ENCODE measurements at regions of chr1 and their contacts with region 1.

Region 1: GRCh38 chr1:27154991-27155781 is at the start of gene SLC9A1:
- DNase-seq: peak; percentile 95 to 97 (median 96)
- H3K4me3 ChIP-seq: peak within 1 kb of the TSS; percentile 71
- H3K27ac ChIP-seq: peak within 1 kb of the TSS; percentile 42 to 78
- H3K4me1 ChIP-seq: peaks cover 15% of the 10 kb centered on the region
- H3K27me3 ChIP-seq: no peaks in the 10 kb centered on the region
- CTCF ChIP-seq: peak; percentile 56 to 77 (median 73)
- EP300 ChIP-seq: no peak
- POLR2A ChIP-seq: peak; percentile 100
- total RNA-seq, gene SLC9A1: 8.6 to 33.7 (median 14.8) TPM

Region 2: GRCh38 chr1:26602378-26602959 is 552.7 kb before region 1 on chr1:
- intact Hi-C with region 1: no loop called
- DNase-seq: peak in 1 of 5 donors; percentile 60
- H3K4me3 ChIP-seq: no peak overlapping the region
- H3K27ac ChIP-seq: no peak overlapping the region
- H3K4me1 ChIP-seq: no peaks in the 10 kb centered on the region
- H3K27me3 ChIP-seq: no peaks in the 10 kb centered on the region
- CTCF ChIP-seq: peak; percentile 81 to 97 (median 94)
- EP300 ChIP-seq: no peak
- POLR2A ChIP-seq: no peak

Region 3: DNA sequence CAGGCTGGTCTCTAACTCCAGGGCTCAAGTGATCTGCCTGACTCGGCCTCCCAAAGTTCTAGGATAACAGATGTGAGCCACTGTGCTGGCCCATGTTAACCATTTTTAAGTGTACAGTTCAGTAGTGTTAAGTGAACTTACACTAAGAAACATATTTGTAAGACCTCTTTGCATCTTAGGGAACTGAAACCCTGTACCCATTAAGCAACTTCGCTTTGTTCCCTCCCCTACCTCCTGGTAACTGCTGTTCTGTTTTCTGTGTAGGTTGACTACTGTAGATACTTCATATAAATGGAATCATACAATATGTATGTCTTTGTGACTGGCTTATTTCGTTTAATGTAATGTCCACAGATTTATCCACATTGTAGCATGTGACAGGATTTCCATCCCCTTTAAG is 222.7 kb before region 1 on chr1:
- intact Hi-C with region 1: no loop called
- DNase-seq: no peak
- H3K4me3 ChIP-seq: no peak overlapping the region
- H3K27ac ChIP-seq: no peak overlapping the region
- H3K4me1 ChIP-seq: no peaks in the 10 kb centered on the region
- H3K27me3 ChIP-seq: no peaks in the 10 kb centered on the region
- CTCF ChIP-seq: no peak
- EP300 ChIP-seq: no peak
- POLR2A ChIP-seq: no peak

Region 4: GRCh38 chr1:27111626-27112573 is 43.3 kb before region 1 on chr1:
- intact Hi-C with region 1: loop called in 1 of 4 experiments (anchors 5 kb)
- DNase-seq: peak; percentile 84 to 93 (median 87)
- H3K4me3 ChIP-seq: no peak overlapping the region
- H3K27ac ChIP-seq: peak overlapping the region in 1 of 2 donors; percentile 64
- H3K4me1 ChIP-seq: peaks cover 10% of the 10 kb centered on the region
- H3K27me3 ChIP-seq: no peaks in the 10 kb centered on the region
- CTCF ChIP-seq: peak in 2 of 3 donors; percentile 24 to 30
- EP300 ChIP-seq: no peak
- POLR2A ChIP-seq: no peak

Region 5: DNA sequence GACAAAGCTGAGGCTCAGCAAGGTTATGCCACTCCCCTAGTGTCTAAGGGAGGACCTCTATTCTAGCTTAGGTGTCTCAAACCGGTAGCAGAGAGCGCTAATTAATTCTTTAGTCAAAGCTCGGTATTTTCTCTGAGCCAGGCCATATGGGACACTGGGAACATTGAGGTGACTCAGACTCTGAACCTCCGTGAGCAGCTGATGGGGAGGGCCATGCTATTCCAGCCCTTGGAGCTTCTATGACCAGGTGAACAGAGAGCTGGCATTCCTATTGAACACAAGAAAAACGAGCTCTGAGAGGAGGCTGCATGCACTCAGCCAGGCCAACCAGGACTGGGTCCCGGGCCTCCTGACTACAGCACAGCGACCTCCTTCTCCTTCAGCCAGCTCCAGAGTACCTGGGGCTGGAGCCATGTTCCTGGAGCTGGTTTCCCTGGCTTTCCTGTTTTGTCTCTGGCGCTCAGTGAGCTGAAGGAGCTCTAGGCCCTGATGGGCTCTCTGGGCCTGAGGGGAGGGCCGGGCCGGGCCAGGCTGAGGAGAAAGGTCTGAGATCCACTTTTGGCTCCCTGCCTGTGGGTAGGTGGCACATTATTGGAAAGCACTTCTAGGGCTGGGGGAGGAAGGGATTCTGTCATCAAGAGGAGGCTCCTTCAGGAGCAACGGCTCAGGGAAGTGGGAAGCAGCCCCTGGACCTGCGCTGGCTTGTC is 37.3 kb before region 1 on chr1:
- intact Hi-C with region 1: loop called in 2 of 4 experiments (anchors 2 to 5 kb)
- DNase-seq: no peak
- H3K4me3 ChIP-seq: no peak overlapping the region
- H3K27ac ChIP-seq: no peak overlapping the region
- H3K4me1 ChIP-seq: peaks cover 10% of the 10 kb centered on the region
- H3K27me3 ChIP-seq: no peaks in the 10 kb centered on the region
- CTCF ChIP-seq: no peak
- EP300 ChIP-seq: no peak
- POLR2A ChIP-seq: no peak